Panc1 (cell line): ENCODE measurements at regions of chr15 and their contacts with region 1.

Region 1: DNA sequence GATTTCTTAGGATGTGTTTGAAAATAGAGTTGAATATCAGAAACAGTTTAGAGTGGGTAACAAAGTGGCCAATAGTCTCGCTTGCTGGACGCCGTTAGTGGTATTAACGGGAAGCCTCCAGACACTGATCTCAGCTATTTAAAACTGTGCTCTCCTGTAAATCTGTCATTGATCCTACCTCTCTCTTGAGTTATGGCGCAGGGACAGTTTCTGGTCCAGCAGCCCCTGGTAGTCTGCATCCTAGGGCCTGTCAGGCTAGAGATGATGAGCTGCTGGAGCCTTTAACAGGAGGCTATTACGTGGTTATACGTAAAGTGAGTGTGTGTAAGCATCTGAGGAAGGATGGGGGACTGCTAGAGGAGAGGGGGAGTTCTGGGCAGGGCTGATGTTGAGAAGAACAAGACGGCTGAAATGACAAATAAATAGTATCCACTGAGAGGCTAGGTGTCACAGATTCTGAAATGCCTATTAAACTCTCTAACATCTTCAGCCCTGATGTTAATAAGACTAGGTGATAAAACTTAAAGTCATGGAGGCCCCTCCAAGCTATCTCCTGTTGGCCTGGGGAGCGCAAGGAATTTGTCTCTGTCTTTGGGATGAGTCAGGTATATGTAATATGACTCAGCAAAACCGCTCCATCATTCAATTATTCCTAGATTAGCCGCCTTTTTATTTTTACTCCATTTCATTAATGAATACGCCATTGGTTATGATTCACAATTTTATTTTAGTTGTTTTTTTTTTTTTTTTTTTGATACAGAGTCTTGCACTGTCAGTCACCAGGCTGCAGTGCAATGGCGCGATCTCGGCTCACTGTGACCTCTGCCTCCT is 155.7 kb downstream of the GREM1 start:
- DNase-seq: no peak
- ATAC-seq: no peak
- H3K4me3 ChIP-seq: no peak overlapping the region
- H3K27ac ChIP-seq: no peak overlapping the region
- H3K4me1 ChIP-seq: no peaks in the 10 kb centered on the region
- H3K27me3 ChIP-seq: no peaks in the 10 kb centered on the region
- CTCF ChIP-seq: no peak

Region 2: DNA sequence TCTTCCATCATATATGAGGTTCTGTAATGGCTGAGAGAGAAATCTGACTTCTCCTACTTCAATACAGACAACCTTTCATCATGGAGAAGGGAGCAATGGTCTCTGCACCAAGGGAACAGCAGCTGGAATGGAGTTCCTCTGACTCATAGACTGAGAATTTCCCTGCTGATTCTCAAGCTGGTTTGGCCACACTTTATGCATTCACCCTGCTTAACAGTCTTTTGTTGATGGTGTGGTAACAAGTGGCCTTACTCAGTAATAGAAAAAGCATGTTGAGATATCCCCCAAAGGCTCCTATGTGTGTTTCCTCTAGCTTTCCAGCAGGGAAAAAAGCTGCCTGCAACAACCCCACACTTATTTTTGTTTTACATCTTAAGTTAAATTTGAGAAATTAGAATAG is 17.6 kb before region 1 on chr15:
- CTCF ChIA-PET with region 1: no interaction called
- POLR2A ChIA-PET with region 1: interaction called, 12 read pairs
- in situ Hi-C with region 1: no loop called
- intact Hi-C with region 1: no loop called
- DNase-seq: no peak
- ATAC-seq: peak; percentile 84
- H3K4me3 ChIP-seq: no peak overlapping the region
- H3K27ac ChIP-seq: no peak overlapping the region
- H3K4me1 ChIP-seq: no peaks in the 10 kb centered on the region
- H3K27me3 ChIP-seq: no peaks in the 10 kb centered on the region
- CTCF ChIP-seq: no peak

Region 3: GRCh38 chr15:33506781-33507296 is 633.3 kb after region 1 on chr15:
- CTCF ChIA-PET with region 1: no interaction called
- POLR2A ChIA-PET with region 1: no interaction called
- in situ Hi-C with region 1: no loop called
- intact Hi-C with region 1: no loop called
- DNase-seq: no peak
- ATAC-seq: no peak
- H3K4me3 ChIP-seq: no peak overlapping the region
- H3K27ac ChIP-seq: no peak overlapping the region
- H3K4me1 ChIP-seq: no peaks in the 10 kb centered on the region
- H3K27me3 ChIP-seq: peaks cover 2% of the 10 kb centered on the region; the same call in 1 of the 2 replicates
- CTCF ChIP-seq: no peak